ENCODE measurements at regions of chr4 and their contacts with region 1.

Region 1: GRCh38 chr4:14916554-14917297 is 85.6 kb upstream of the CPEB2 start:
- DNase-seq: peak; percentile 20 to 45 (median 43)
- ATAC-seq: peak; percentile 90 to 93
- H3K4me3 ChIP-seq: no peak overlapping the region
- H3K27ac ChIP-seq: peak overlapping the region; percentile 75
- H3K4me1 ChIP-seq: peaks cover 1% of the 10 kb centered on the region
- H3K27me3 ChIP-seq: no peaks in the 10 kb centered on the region

Region 2: DNA sequence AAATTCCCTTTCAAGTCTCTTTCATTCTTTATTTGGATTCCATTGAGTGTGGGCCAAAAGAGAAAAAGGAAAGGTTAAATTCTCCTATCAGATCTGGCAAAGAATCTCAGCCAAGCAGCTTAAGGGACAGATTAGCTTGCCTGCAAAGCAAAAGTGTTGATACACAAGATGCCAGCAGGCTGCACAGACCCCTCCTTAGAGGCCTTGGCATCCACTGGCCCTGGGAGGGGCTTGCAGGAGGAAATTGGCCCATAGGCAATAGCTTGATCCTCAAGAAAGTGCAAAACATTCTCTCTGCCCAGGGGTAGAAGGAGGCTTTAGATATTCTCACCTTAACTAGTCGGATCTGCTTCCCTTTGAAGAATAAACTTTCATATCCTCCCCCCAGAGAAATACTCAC is 214.8 kb before region 1 on chr4:
- intact Hi-C with region 1: no loop called
- DNase-seq: peak; percentile 13 to 45 (median 41)
- ATAC-seq: peak; percentile 64 to 90
- H3K4me3 ChIP-seq: no peak overlapping the region
- H3K27ac ChIP-seq: no peak overlapping the region
- H3K4me1 ChIP-seq: peaks cover 8% of the 10 kb centered on the region
- H3K27me3 ChIP-seq: no peaks in the 10 kb centered on the region

Region 3: DNA sequence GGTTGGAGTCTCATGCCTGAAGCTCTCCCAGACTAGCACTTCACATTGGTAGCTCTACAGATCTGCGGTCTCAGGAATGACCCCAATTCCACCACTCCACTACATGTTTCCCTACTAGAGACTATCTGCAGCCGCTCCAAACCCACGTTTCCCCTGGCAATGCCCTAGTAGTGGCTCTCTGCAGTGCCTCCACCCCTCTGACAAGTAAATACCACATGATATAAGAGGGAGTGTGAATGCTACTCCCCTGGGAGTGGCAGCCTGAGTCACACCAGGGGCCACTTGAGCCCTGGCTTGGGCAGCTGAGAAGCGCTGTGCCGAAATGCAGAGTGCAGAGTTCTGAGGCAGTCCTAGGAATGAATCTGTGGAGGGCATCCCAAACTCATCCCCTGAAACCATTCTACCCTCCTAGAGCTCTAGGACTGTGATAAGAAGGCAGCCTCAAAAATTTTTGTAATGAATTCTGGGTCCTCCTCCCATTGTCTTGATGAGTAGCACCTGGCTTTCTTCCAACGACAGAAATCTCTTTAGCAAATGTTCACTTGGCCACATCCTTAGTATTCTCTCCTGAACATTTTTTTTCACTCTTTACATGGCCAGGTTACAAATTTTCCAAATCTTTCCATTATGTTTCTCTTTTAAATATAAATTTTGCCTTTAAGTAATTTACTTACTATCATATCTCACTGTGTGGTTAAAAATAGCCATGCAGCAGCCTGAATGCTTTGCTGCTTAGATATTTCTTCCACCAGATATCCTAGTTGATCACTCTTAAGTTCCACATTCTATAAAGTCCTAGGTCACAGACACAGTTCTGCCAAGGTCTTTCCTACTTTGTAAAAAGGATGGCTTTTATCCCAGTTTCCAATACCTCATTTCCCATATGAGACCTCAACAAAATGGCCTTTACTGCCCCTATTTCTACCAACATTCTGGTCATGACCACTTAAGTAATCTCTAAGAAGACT is 74.6 kb before region 1 on chr4:
- intact Hi-C with region 1: loop called in 3 of 4 experiments (anchors 5 to 10 kb)
- DNase-seq: peak; percentile 50 to 63 (median 50)
- ATAC-seq: peak; percentile 84 to 94
- H3K4me3 ChIP-seq: no peak overlapping the region
- H3K27ac ChIP-seq: peak overlapping the region; percentile 55
- H3K4me1 ChIP-seq: peaks cover 2% of the 10 kb centered on the region
- H3K27me3 ChIP-seq: no peaks in the 10 kb centered on the region

Region 4: GRCh38 chr4:15001869-15002658 is 85.3 kb after region 1 on chr4 and contains the start of gene CPEB2:
- intact Hi-C with region 1: loop called in 1 of 4 experiments (anchors 5 kb)
- DNase-seq: peak; percentile 95 to 99 (median 98)
- ATAC-seq: peak; percentile 92
- H3K4me3 ChIP-seq: peak within 1 kb of the TSS; percentile 93
- H3K27ac ChIP-seq: peak within 1 kb of the TSS; percentile 99
- H3K4me1 ChIP-seq: no peaks in the 10 kb centered on the region
- H3K27me3 ChIP-seq: no peaks in the 10 kb centered on the region
- total RNA-seq, gene CPEB2: 12.7 to 18.3 (median 14.2) TPM

Region 5: DNA sequence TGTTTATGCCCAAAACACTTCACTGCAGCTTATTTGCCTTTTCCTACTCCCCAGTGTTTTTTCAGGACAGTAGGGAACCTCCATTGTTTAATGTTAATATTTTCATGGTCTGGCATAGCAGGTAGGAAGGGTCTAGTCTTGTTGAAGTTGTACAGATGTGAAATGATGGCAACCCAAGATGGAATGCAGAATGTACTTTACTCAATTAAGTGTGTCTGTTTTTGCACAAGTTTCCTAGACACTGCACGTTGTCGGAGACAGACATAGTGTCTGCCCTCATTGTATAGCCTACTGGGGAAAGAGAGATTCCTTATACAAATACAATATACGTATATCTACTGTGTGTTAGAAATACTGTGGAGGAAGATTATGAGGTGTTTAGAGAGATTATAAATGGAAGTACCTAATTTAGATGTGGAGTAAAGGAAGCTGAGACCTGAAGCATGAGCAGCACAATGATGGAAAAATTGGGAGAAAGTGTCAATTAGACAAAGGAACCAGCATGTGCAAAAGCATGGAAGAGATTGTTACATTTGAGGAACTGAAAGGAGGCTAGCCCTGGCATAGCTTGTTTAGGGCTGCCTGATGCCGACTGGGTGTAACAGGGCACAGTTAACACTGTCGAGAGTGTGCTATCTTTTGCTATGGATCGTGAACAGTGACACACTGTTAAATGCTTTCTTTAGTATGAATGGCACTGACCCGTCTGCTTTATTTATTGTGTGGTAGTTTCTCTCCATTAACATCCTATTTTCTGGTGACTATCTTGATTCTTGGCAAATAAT is 104.0 kb after region 1 on chr4:
- intact Hi-C with region 1: no loop called
- DNase-seq: no peak
- ATAC-seq: peak; percentile 45 to 54
- H3K4me3 ChIP-seq: no peak overlapping the region
- H3K27ac ChIP-seq: no peak overlapping the region
- H3K4me1 ChIP-seq: no peaks in the 10 kb centered on the region
- H3K27me3 ChIP-seq: no peaks in the 10 kb centered on the region

Region 6: GRCh38 chr4:15106399-15106798 is 189.7 kb after region 1 on chr4:
- intact Hi-C with region 1: no loop called
- DNase-seq: no peak
- ATAC-seq: no peak
- H3K4me3 ChIP-seq: no peak overlapping the region
- H3K27ac ChIP-seq: no peak overlapping the region
- H3K4me1 ChIP-seq: no peaks in the 10 kb centered on the region
- H3K27me3 ChIP-seq: no peaks in the 10 kb centered on the region

Measured in right cardiac atrium (tissue), 5 donors.